ENCODE measurements at regions of chr7 and their contacts with region 1.

Region 1: GRCh38 chr7:87416682-87417587 is 58.5 kb downstream of the ABCB4 start:
- DNase-seq: peak; percentile 73
- H3K4me3 ChIP-seq: no peak overlapping the region
- H3K27ac ChIP-seq: no peak overlapping the region
- H3K4me1 ChIP-seq: no peaks in the 10 kb centered on the region
- H3K27me3 ChIP-seq: no peaks in the 10 kb centered on the region
- CTCF ChIP-seq: peak; percentile 71

Region 2: GRCh38 chr7:86926732-86927131 is 490.2 kb before region 1 on chr7:
- CTCF ChIA-PET with region 1: no interaction called
- POLR2A ChIA-PET with region 1: no interaction called
- intact Hi-C with region 1: loop called (anchors 5 kb)
- DNase-seq: peak; percentile 70
- H3K4me3 ChIP-seq: no peak overlapping the region
- H3K27ac ChIP-seq: no peak overlapping the region
- H3K4me1 ChIP-seq: peaks cover 4% of the 10 kb centered on the region
- H3K27me3 ChIP-seq: no peaks in the 10 kb centered on the region
- CTCF ChIP-seq: peak; percentile 78

Region 3: DNA sequence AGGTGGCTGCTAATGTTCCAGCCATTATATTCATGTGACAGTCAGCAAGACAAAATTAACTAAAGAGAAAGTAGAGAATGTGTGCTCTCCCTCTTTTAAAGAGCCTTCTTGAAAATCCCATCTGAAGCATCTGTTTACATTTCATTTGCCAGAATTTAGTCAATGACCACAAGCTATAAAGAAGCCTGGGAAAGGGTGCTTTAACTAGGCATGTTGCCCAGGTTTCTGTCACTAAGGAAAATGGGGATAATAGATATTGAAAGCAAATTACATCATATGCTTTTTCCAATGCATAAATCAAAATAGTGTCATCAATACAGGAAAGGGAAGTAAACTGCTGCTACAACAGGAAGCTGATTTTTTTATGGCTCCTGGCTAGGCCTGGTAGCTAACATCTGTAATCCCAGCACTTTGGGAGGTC is 425.2 kb before region 1 on chr7:
- CTCF ChIA-PET with region 1: no interaction called
- POLR2A ChIA-PET with region 1: no interaction called
- intact Hi-C with region 1: no loop called
- DNase-seq: no peak
- H3K4me3 ChIP-seq: no peak overlapping the region
- H3K27ac ChIP-seq: no peak overlapping the region
- H3K4me1 ChIP-seq: no peaks in the 10 kb centered on the region
- H3K27me3 ChIP-seq: peaks cover 7% of the 10 kb centered on the region
- CTCF ChIP-seq: no peak

Region 4: GRCh38 chr7:87287738-87288341 is 129.1 kb before region 1 on chr7:
- CTCF ChIA-PET with region 1: no interaction called
- POLR2A ChIA-PET with region 1: no interaction called
- intact Hi-C with region 1: no loop called
- DNase-seq: no peak
- H3K4me3 ChIP-seq: no peak overlapping the region
- H3K27ac ChIP-seq: no peak overlapping the region
- H3K4me1 ChIP-seq: no peaks in the 10 kb centered on the region
- H3K27me3 ChIP-seq: no peaks in the 10 kb centered on the region
- CTCF ChIP-seq: no peak

Region 5: GRCh38 chr7:87312215-87312865 is 104.6 kb before region 1 on chr7:
- CTCF ChIA-PET with region 1: interaction called, 7 read pairs
- POLR2A ChIA-PET with region 1: no interaction called
- intact Hi-C with region 1: loop called (anchors 1 kb)
- DNase-seq: peak; percentile 60
- H3K4me3 ChIP-seq: no peak overlapping the region
- H3K27ac ChIP-seq: no peak overlapping the region
- H3K4me1 ChIP-seq: no peaks in the 10 kb centered on the region
- H3K27me3 ChIP-seq: no peaks in the 10 kb centered on the region
- CTCF ChIP-seq: peak; percentile 97

Measured in A673 (cell line).